Caco-2 (cell line): ENCODE measurements at regions of chr2 and their contacts with region 1.

Region 1: DNA sequence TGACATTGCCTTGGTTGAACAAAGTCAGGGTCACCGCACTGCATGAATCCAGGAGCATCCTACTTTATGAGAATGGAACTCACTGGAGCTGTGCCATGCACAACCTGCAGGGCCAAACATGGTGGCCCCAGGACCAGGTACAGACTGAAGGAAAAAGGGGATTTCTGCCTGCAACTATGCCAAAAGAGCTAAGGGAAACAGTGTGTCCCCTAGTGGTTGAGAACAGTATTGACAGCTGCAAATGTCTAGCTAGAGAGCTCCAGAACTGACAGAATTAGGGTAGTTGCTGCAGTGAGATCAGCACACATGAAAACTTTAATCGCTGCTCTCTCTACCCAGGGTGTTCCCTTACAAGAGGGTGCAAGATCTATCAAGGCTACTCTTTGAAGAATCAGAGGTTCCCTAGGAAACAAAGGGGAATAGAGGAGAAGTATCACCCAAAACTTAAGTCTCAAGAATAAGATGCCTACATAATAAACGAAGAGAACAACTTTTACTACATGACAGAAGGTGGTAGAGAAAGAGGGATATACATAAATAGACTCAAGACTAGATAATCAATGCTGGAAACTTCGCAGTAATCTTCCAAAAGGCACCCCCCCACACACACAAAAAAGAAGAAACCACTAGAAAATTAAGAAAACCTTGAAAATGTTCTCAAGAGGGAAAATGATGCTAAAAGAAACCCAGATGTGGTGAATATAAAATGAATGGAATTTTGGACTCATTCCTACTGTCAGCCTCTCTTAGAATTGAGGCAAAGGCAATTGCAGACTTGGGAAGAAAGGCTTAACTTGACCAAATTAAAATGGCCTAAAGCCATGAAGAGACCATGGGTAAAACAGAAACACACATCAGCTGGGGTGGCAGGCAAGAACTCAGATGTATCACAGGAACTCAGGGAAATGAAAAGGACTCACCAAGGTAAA is 43.6 kb upstream of the IHH start:
- DNase-seq: peak; percentile 60
- H3K4me3 ChIP-seq: no peak overlapping the region
- H3K4me3 Mint-ChIP-seq: no peak overlapping the region
- H3K27ac Mint-ChIP-seq: no peak overlapping the region
- H3K4me1 ChIP-seq: peaks cover 10% of the 10 kb centered on the region
- H3K4me1 Mint-ChIP-seq: peaks cover 4% of the 10 kb centered on the region
- H3K27me3 ChIP-seq: no peaks in the 10 kb centered on the region
- H3K27me3 Mint-ChIP-seq: no peaks in the 10 kb centered on the region
- CTCF ChIP-seq: peak; percentile 80 to 86

Region 2: DNA sequence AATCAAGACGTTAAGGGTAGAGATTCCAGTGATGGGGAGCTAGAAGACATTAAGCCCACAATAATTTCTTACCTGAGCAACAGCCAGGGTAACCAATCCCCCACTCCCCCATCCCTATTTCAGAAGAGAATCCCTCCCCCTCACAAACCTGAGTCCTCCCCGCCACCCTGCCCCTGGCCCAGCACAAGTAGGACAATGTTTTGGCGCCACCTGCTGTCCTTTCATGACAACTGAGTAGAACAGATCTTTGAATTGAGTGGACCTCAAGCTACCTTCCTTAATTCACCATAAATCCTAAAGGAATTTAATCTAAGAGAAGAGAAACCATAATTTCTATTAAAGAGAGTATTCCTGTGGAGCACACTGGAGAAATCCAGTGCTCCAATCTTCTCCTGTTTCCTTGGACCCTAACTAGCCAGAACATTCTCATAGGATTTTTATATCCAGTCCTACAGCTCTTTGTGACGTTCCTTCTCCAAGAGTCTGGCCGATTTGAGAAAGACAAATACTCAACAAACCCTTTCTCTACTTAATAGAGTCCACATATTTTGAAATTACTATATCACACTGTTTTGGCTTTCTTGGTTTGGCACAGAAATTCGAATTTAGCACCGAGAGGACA is 15.2 kb after region 1 on chr2:
- CTCF ChIA-PET with region 1: interaction called, 23 read pairs
- POLR2A ChIA-PET with region 1: no interaction called
- intact Hi-C with region 1: no loop called
- DNase-seq: peak; percentile 77 to 80
- H3K4me3 ChIP-seq: no peak overlapping the region
- H3K4me3 Mint-ChIP-seq: no peak overlapping the region
- H3K27ac Mint-ChIP-seq: no peak overlapping the region
- H3K4me1 ChIP-seq: peaks cover 36% of the 10 kb centered on the region
- H3K4me1 Mint-ChIP-seq: peaks cover 44% of the 10 kb centered on the region
- H3K27me3 ChIP-seq: no peaks in the 10 kb centered on the region
- H3K27me3 Mint-ChIP-seq: no peaks in the 10 kb centered on the region
- CTCF ChIP-seq: peak; percentile 84 to 89

Region 3: DNA sequence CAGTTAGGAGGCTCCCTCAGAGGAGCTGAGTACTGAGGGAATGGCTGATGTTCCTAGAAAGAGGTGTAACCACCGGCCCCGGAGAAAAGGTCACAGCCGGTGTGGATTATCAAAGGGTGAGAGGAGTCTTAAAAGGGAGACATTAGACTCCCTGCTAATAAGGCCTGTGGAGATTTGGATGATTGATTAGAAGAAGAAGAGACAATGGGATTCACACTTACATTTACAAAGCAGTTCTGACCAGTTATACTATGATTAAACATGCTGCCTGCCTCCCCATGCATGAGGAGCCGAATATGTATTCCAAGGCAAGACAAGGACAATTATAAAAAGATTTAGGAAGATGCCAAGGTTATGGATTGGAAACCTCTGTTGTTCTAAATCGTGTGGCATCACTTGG is 825.5 kb after region 1 on chr2:
- CTCF ChIA-PET with region 1: no interaction called
- POLR2A ChIA-PET with region 1: no interaction called
- intact Hi-C with region 1: no loop called
- DNase-seq: no peak
- H3K4me3 ChIP-seq: no peak overlapping the region
- H3K4me3 Mint-ChIP-seq: no peak overlapping the region
- H3K27ac Mint-ChIP-seq: no peak overlapping the region
- H3K4me1 ChIP-seq: no peaks in the 10 kb centered on the region; the same call in 1 of the 2 replicates
- H3K4me1 Mint-ChIP-seq: no peaks in the 10 kb centered on the region
- H3K27me3 ChIP-seq: no peaks in the 10 kb centered on the region
- H3K27me3 Mint-ChIP-seq: peaks cover 11% of the 10 kb centered on the region
- CTCF ChIP-seq: no peak